ENCODE measurements at regions of chr1 and their contacts with region 1.

Region 1: DNA sequence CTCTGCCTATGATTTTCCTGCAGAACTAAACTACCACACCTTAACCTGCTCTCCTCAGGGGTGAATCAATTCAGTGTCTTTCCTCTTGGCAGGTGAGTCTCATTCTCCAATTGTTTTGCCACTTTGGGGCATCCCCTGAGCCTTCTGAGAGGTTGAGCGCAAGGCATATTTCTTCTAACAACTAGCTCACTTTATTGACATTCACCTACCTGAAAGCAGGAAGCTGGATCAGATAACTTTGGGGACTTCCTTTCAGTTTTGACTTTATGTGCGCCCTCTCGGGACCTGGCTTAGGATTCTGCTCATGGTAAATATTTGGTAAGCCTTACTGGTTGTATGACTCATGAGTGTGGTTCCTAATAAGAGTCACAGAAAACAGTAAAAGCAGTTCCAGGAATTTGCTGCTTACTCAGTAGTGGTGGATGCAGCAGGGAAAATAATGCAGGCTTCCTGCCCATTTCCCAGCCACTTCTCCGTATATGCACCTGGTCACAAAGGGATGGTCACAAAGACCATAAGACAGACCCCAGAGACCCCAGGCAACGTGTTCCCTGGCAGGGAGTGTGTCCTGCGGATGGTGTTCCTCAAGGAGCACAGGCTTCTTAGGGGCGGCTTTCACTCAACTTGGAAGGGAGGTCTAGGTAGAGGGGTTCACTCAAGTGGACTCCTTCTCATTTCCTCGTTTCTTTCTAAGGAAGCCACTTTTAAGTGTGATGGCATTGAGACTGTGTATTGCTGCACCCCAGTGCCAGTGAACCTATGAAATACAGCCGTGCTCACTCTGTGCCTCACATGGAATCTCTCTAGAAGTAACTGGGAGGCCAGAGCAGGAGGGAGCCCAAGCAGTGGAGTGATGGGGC is 22.0 kb upstream of the BATF3 start:
- DNase-seq: no peak
- ATAC-seq: peak; percentile 24 to 78 (median 58)
- H3K4me3 ChIP-seq: no peak overlapping the region
- H3K4me3 Mint-ChIP-seq: peak overlapping the region in 2 of 3 donors; percentile 4 to 25
- H3K27ac ChIP-seq: no peak overlapping the region
- H3K27ac Mint-ChIP-seq: peak overlapping the region; percentile 17 to 66
- H3K4me1 ChIP-seq: peaks cover 0 to 5% of the 10 kb centered on the region in 2 experiments
- H3K4me1 Mint-ChIP-seq: peaks cover 0 to 23% (median 20%) of the 10 kb centered on the region in 3 donors
- H3K27me3 ChIP-seq: no peaks in the 10 kb centered on the region
- H3K27me3 Mint-ChIP-seq: peaks cover 0 to 10% of the 10 kb centered on the region in 2 donors

Region 2: GRCh38 chr1:212518188-212519054 is 203.2 kb before region 1 on chr1:
- CTCF ChIA-PET with region 1: no interaction called
- POLR2A ChIA-PET with region 1: no interaction called
- DNase-seq: no peak
- ATAC-seq: no peak
- H3K4me3 ChIP-seq: no peak overlapping the region
- H3K4me3 Mint-ChIP-seq: no peak overlapping the region
- H3K27ac ChIP-seq: no peak overlapping the region
- H3K27ac Mint-ChIP-seq: no peak overlapping the region
- H3K4me1 ChIP-seq: peaks cover 3 to 12% of the 10 kb centered on the region in 2 experiments
- H3K4me1 Mint-ChIP-seq: peaks cover 6 to 14% (median 8%) of the 10 kb centered on the region in 3 donors
- H3K27me3 ChIP-seq: peaks cover 11 to 58% of the 10 kb centered on the region in 2 experiments
- H3K27me3 Mint-ChIP-seq: peaks cover 42 to 47% of the 10 kb centered on the region in 2 donors

Region 3: GRCh38 chr1:212558693-212559480 is 162.7 kb before region 1 on chr1:
- CTCF ChIA-PET with region 1: no interaction called
- POLR2A ChIA-PET with region 1: interaction called in 1 of 2 experiments, 10 read pairs
- DNase-seq: peak; percentile 83 to 96 (median 90)
- ATAC-seq: peak; percentile 95 to 98 (median 96)
- H3K4me3 ChIP-seq: peak overlapping the region; percentile 77 to 84
- H3K4me3 Mint-ChIP-seq: peak overlapping the region; percentile 76 to 84 (median 78)
- H3K27ac ChIP-seq: peak overlapping the region; percentile 88
- H3K27ac Mint-ChIP-seq: peak overlapping the region; percentile 82 to 95
- H3K4me1 ChIP-seq: peaks cover 7 to 15% of the 10 kb centered on the region in 2 experiments
- H3K4me1 Mint-ChIP-seq: peaks cover 6 to 13% (median 11%) of the 10 kb centered on the region in 3 donors
- H3K27me3 ChIP-seq: peaks cover 0 to 3% of the 10 kb centered on the region in 2 experiments
- H3K27me3 Mint-ChIP-seq: peaks cover 0 to 3% of the 10 kb centered on the region in 2 donors

Region 4: GRCh38 chr1:212630158-212630900 is 91.3 kb before region 1 on chr1:
- CTCF ChIA-PET with region 1: no interaction called
- POLR2A ChIA-PET with region 1: no interaction called
- DNase-seq: peak in 31 of 35 experiments; percentile 19 to 72 (median 46)
- ATAC-seq: peak; percentile 89 to 96 (median 94)
- H3K4me3 ChIP-seq: no peak overlapping the region
- H3K4me3 Mint-ChIP-seq: no peak overlapping the region
- H3K27ac ChIP-seq: no peak overlapping the region
- H3K27ac Mint-ChIP-seq: no peak overlapping the region
- H3K4me1 ChIP-seq: peaks cover 4 to 9% of the 10 kb centered on the region in 2 experiments
- H3K4me1 Mint-ChIP-seq: peaks cover 5 to 8% (median 8%) of the 10 kb centered on the region in 3 donors
- H3K27me3 ChIP-seq: peaks cover 0 to 26% of the 10 kb centered on the region in 2 experiments
- H3K27me3 Mint-ChIP-seq: peaks cover 4 to 8% of the 10 kb centered on the region in 2 donors

Region 5: DNA sequence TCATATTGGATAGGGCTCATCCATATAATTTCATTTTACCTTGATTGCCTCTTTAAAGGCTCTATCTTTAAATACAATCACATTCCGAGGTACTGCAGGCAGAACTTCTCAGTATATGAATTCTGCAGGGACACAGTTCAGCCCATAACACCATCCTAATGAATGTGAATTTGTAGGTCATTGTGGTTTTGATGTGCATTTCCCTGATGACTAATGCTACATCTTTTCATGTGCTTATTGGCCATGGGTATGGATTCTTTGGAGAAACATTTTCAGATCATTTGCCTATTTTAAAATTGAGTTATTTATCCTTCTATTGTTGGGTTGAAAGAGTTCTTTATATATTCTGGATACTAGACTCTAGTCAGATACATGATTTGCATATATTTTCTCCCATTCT is 319.8 kb after region 1 on chr1:
- CTCF ChIA-PET with region 1: no interaction called
- POLR2A ChIA-PET with region 1: no interaction called
- DNase-seq: no peak
- ATAC-seq: no peak
- H3K4me3 ChIP-seq: no peak overlapping the region
- H3K4me3 Mint-ChIP-seq: no peak overlapping the region
- H3K27ac ChIP-seq: no peak overlapping the region
- H3K27ac Mint-ChIP-seq: no peak overlapping the region
- H3K4me1 ChIP-seq: no peaks in the 10 kb centered on the region
- H3K4me1 Mint-ChIP-seq: peaks cover 0 to 6% (median 5%) of the 10 kb centered on the region in 3 donors
- H3K27me3 ChIP-seq: no peaks in the 10 kb centered on the region
- H3K27me3 Mint-ChIP-seq: peaks cover 7 to 10% of the 10 kb centered on the region in 2 donors

Measured in T-cell (primary cell).